IMR-90 (cell line): ENCODE measurements at regions of chr7 and their contacts with region 1.

Region 1: GRCh38 chr7:19224951-19225350 is 79.7 kb upstream of the FERD3L start:
- DNase-seq: no peak
- ATAC-seq: no peak
- H3K4me3 ChIP-seq: no peak overlapping the region
- H3K27ac ChIP-seq: no peak overlapping the region
- H3K4me1 ChIP-seq: no peaks in the 10 kb centered on the region
- H3K27me3 ChIP-seq: no peaks in the 10 kb centered on the region
- CTCF ChIP-seq: no peak
- POLR2A ChIP-seq: no peak
- RAD21 ChIP-seq: no peak

Region 2: GRCh38 chr7:18706670-18707069 is 518.3 kb before region 1 on chr7:
- CTCF ChIA-PET with region 1: no interaction called
- POLR2A ChIA-PET with region 1: no interaction called
- dilution Hi-C with region 1: no loop called
- in situ Hi-C with region 1: no loop called
- intact Hi-C with region 1: no loop called
- DNase-seq: no peak
- ATAC-seq: no peak
- H3K4me3 ChIP-seq: no peak overlapping the region
- H3K27ac ChIP-seq: no peak overlapping the region
- H3K4me1 ChIP-seq: no peaks in the 10 kb centered on the region
- H3K27me3 ChIP-seq: no peaks in the 10 kb centered on the region
- CTCF ChIP-seq: no peak
- POLR2A ChIP-seq: no peak
- RAD21 ChIP-seq: no peak

Region 3: GRCh38 chr7:19284596-19285300 is 59.8 kb after region 1 on chr7:
- CTCF ChIA-PET with region 1: no interaction called
- POLR2A ChIA-PET with region 1: no interaction called
- dilution Hi-C with region 1: no loop called
- in situ Hi-C with region 1: no loop called
- intact Hi-C with region 1: loop called (anchors 5 kb)
- DNase-seq: peak; percentile 72
- ATAC-seq: peak; percentile 83
- H3K4me3 ChIP-seq: no peak overlapping the region
- H3K27ac ChIP-seq: no peak overlapping the region
- H3K4me1 ChIP-seq: no peaks in the 10 kb centered on the region
- H3K27me3 ChIP-seq: no peaks in the 10 kb centered on the region
- CTCF ChIP-seq: no peak
- POLR2A ChIP-seq: no peak
- RAD21 ChIP-seq: no peak